PC-3 (cell line): ENCODE measurements at regions of chr13 and their contacts with region 1.

Region 1: DNA sequence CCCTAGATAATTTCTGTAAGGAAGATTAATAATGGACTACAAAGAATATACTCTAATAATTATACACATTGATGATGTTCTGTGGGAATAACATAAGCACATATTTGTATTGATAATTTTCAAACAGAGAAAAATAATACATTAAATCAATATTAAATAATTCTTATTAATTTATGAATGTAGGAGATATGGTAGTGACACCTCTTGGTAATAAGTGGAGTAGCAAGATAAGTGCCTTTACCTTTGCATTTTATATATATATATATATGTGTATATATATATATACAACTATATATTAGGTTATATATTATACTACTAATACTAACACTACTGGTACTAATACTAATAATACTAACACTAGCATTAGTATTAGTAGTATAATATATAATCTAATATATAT is 905.8 kb downstream of the SLITRK1 start:
- DNase-seq: peak; percentile 2
- ATAC-seq: no peak
- H3K4me3 ChIP-seq: no peak overlapping the region
- H3K27ac ChIP-seq: no peak overlapping the region
- H3K4me1 ChIP-seq: no peaks in the 10 kb centered on the region
- H3K27me3 ChIP-seq: no peaks in the 10 kb centered on the region
- CTCF ChIP-seq: no peak

Region 2: GRCh38 chr13:82698941-82699340 is 277.6 kb before region 1 on chr13:
- CTCF ChIA-PET with region 1: no interaction called
- POLR2A ChIA-PET with region 1: no interaction called
- intact Hi-C with region 1: no loop called
- DNase-seq: peak; percentile 6
- ATAC-seq: no peak
- H3K4me3 ChIP-seq: no peak overlapping the region
- H3K27ac ChIP-seq: no peak overlapping the region
- H3K4me1 ChIP-seq: no peaks in the 10 kb centered on the region
- H3K27me3 ChIP-seq: no peaks in the 10 kb centered on the region
- CTCF ChIP-seq: no peak

Region 3: DNA sequence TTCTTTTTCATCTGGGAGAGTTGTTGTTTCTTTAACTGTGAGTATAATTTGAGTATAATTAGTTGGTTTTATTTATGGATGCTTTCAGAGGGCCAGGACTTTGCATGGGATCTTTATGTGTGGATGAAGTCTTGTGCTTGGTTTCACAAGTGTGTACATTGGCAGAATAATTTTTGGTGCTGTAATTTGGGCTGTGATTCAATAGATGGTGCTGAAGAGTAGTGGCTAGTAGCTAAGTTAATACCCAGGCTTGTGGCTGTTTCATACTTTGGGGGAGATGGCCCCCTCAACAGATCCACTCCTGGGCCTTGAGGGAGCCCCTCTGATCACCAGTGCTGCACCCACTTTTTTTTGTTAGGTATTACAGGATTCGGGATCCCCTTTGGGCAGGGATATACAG is 236.6 kb before region 1 on chr13:
- CTCF ChIA-PET with region 1: no interaction called
- POLR2A ChIA-PET with region 1: no interaction called
- intact Hi-C with region 1: loop called (anchors 10 kb)
- DNase-seq: peak; percentile 28
- ATAC-seq: peak; percentile 56
- H3K4me3 ChIP-seq: no peak overlapping the region
- H3K27ac ChIP-seq: no peak overlapping the region
- H3K4me1 ChIP-seq: no peaks in the 10 kb centered on the region
- H3K27me3 ChIP-seq: no peaks in the 10 kb centered on the region
- CTCF ChIP-seq: peak; percentile 54; the same call in 1 of the 2 replicates